B cell (primary cell): ENCODE measurements at regions of chr6 and their contacts with region 1.

Region 1: DNA sequence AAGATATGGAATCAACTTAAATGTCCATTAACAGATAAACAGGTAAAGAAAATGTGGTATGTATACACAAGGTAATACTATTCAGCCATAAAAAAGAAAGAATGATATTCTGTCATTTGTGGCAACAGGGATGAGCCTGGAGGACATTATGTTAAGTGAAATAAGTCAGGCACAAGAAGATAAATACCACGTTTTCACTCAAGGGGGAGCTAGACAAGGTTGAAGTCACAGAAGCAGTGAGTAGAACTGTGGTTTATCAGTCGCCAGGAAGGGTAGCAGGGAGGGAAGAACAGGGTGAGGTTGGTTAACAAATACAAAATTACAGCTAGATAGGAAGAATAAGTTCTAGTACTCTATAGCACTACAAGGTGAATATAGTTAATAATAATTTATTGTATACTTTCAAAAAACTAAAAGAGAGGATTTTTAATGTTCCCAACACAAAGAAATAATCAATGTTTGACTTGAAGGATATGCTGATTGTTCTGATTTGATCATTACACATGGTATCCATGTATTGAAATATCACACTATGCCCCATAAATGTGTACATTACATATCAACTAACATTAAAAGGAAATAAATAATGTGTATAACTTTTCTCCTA is 21.1 kb downstream of the RTN4IP1 start:
- DNase-seq: peak; percentile 85
- ATAC-seq: peak; percentile 89
- H3K4me3 ChIP-seq: no peak overlapping the region
- H3K4me3 Mint-ChIP-seq: no peak overlapping the region
- H3K27ac ChIP-seq: no peak overlapping the region
- H3K27ac Mint-ChIP-seq: no peak overlapping the region
- H3K4me1 ChIP-seq: peaks cover 25 to 39% of the 10 kb centered on the region in 2 donors
- H3K4me1 Mint-ChIP-seq: peaks cover 43% of the 10 kb centered on the region
- H3K27me3 ChIP-seq: no peaks in the 10 kb centered on the region
- H3K27me3 Mint-ChIP-seq: no peaks in the 10 kb centered on the region
- CTCF ChIP-seq: peak; percentile 92

Region 2: DNA sequence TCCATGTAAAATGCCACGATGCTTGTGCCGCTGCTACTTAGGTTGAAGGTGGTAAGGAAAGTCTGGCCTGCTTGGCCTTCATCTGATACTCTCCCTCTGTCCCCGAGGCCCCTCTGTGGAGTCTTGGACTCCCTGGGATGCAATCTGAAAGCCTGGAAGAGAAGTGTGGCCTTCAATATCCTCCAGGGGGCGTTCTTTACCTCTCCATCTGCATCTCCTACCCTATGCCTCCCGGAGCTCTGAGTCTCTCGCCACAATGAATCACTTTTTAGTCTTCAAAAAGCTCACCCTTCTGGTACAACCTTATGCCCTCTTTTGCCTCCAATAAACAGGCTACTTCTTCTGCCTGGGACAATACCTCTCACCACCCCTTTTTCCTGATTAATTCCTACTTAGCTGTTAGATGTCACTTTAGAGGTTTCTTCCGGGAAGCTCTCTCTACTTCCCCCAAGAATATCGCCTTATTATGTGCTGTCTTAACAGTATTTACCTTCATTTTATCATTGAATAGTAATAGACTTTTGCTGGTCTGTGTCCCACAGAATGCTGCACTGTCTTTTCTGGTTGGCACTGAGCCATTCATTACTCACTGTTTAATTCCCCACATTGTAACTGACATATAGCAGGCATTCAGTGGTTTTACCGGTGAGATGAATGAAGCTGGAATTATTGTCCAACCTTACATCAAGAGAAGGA is 268.7 kb before region 1 on chr6:
- CTCF ChIA-PET with region 1: interaction called, 3 read pairs
- POLR2A ChIA-PET with region 1: no interaction called
- intact Hi-C with region 1: loop called (anchors 1 kb)
- DNase-seq: peak; percentile 66
- ATAC-seq: peak; percentile 74
- H3K4me3 ChIP-seq: peak overlapping the region in 2 of 5 experiments; percentile 17 to 24
- H3K4me3 Mint-ChIP-seq: peak overlapping the region; percentile 61
- H3K27ac ChIP-seq: no peak overlapping the region
- H3K27ac Mint-ChIP-seq: no peak overlapping the region
- H3K4me1 ChIP-seq: peaks cover 5% of the 10 kb centered on the region in 2 donors
- H3K4me1 Mint-ChIP-seq: peaks cover 2% of the 10 kb centered on the region
- H3K27me3 ChIP-seq: peaks cover 0 to 2% (median 0%) of the 10 kb centered on the region in 4 experiments
- H3K27me3 Mint-ChIP-seq: peaks cover 31% of the 10 kb centered on the region
- CTCF ChIP-seq: peak; percentile 81

Region 3: GRCh38 chr6:106568530-106568929 is 39.6 kb before region 1 on chr6:
- CTCF ChIA-PET with region 1: interaction called, 17 read pairs
- POLR2A ChIA-PET with region 1: interaction called, 3 read pairs
- intact Hi-C with region 1: loop called (anchors 5 kb)
- DNase-seq: no peak
- ATAC-seq: no peak
- H3K4me3 ChIP-seq: no peak overlapping the region
- H3K4me3 Mint-ChIP-seq: no peak overlapping the region
- H3K27ac ChIP-seq: no peak overlapping the region
- H3K27ac Mint-ChIP-seq: no peak overlapping the region
- H3K4me1 ChIP-seq: no peaks in the 10 kb centered on the region
- H3K4me1 Mint-ChIP-seq: peaks cover 14% of the 10 kb centered on the region
- H3K27me3 ChIP-seq: no peaks in the 10 kb centered on the region
- H3K27me3 Mint-ChIP-seq: no peaks in the 10 kb centered on the region
- CTCF ChIP-seq: no peak

Region 4: GRCh38 chr6:106629103-106629858 is 21.1 kb after region 1 on chr6 and contains the starts of genes QRSL1 and RTN4IP1:
- CTCF ChIA-PET with region 1: interaction called, 75 read pairs
- POLR2A ChIA-PET with region 1: interaction called, 8 read pairs
- intact Hi-C with region 1: loop called (anchors 1 kb)
- DNase-seq: peak; percentile 96
- ATAC-seq: peak; percentile 83
- H3K4me3 ChIP-seq: peak within 1 kb of the TSS; percentile 67 to 98 (median 94)
- H3K4me3 Mint-ChIP-seq: peak within 1 kb of the TSS; percentile 98
- H3K27ac ChIP-seq: peak within 1 kb of the TSS; percentile 87 to 97
- H3K27ac Mint-ChIP-seq: peak within 1 kb of the TSS; percentile 98
- H3K4me1 ChIP-seq: peaks cover 43 to 50% of the 10 kb centered on the region in 2 donors
- H3K4me1 Mint-ChIP-seq: peaks cover 64% of the 10 kb centered on the region
- H3K27me3 ChIP-seq: no peaks in the 10 kb centered on the region
- H3K27me3 Mint-ChIP-seq: no peaks in the 10 kb centered on the region
- CTCF ChIP-seq: no peak
- total RNA-seq, gene QRSL1: 38.5 and 42.1 TPM in 2 replicates
- total RNA-seq, gene RTN4IP1: 12.1 and 13.3 TPM in 2 replicates

Region 5: DNA sequence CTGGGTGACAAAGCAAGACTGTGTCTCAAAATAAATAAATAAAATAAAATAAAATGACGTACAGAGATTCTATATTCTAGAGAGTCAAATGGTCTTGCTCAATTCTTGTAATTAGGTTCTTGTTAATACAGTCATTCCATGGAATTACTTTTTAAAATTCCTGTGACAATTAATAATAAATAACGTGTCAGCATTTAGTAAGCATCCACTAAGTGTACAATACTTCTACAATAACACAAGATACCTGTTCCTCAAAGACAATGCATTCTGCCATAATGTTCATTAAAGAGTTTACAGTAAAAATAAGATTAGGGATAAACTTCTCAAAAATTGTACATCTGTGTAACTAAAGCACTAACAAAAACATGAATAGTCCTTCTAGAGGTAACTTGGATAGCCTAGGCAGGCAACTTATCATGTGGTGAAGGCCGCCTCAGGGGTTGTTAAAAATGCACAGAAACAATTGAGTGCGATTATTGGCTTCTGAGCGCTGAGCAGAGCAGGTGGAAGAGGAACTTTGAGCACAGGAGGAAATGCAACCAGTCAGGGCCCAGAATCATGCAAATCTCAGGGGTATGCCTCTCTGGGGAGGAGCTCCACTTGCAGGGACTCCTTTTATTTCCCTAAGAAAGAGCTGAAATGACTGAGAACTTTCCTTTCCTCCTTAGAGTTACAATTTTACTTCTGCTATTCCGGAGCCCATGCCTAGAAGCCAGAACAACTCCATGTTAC is 58.3 kb after region 1 on chr6:
- CTCF ChIA-PET with region 1: interaction called, 15 read pairs
- POLR2A ChIA-PET with region 1: no interaction called
- intact Hi-C with region 1: loop called (anchors 2 kb)
- DNase-seq: peak; percentile 86
- ATAC-seq: peak; percentile 99
- H3K4me3 ChIP-seq: peak overlapping the region in 2 of 5 experiments; percentile 2 to 29
- H3K4me3 Mint-ChIP-seq: peak overlapping the region; percentile 80
- H3K27ac ChIP-seq: peak overlapping the region; percentile 30 to 81
- H3K27ac Mint-ChIP-seq: peak overlapping the region; percentile 93
- H3K4me1 ChIP-seq: peaks cover 49 to 61% of the 10 kb centered on the region in 2 donors
- H3K4me1 Mint-ChIP-seq: peaks cover 64% of the 10 kb centered on the region
- H3K27me3 ChIP-seq: no peaks in the 10 kb centered on the region
- H3K27me3 Mint-ChIP-seq: no peaks in the 10 kb centered on the region
- CTCF ChIP-seq: no peak

Region 6: DNA sequence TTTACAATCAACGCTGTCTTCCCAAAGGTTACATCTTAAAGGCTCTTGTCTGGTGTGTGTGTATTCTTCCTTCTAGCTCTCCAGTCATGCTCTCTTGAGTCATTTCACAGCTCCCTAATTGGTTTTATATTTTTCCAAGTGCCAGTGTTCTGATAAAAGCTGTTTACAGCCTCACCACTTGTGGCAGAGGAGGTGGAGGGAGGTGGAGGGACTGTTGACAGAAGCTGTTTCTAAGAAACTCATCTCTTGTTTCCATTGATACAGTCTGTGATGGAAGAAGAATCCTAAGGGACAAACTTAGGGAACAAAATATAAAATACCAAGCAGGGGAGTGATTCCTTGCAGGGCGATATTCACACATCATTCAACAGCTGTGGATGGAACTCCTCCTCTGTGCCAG is 85.3 kb after region 1 on chr6:
- CTCF ChIA-PET with region 1: interaction called, 80 read pairs
- POLR2A ChIA-PET with region 1: no interaction called
- intact Hi-C with region 1: loop called (anchors 1 kb)
- DNase-seq: no peak
- ATAC-seq: no peak
- H3K4me3 ChIP-seq: no peak overlapping the region
- H3K4me3 Mint-ChIP-seq: no peak overlapping the region
- H3K27ac ChIP-seq: no peak overlapping the region
- H3K27ac Mint-ChIP-seq: no peak overlapping the region
- H3K4me1 ChIP-seq: peaks cover 36 to 43% of the 10 kb centered on the region in 2 donors
- H3K4me1 Mint-ChIP-seq: peaks cover 55% of the 10 kb centered on the region
- H3K27me3 ChIP-seq: no peaks in the 10 kb centered on the region
- H3K27me3 Mint-ChIP-seq: no peaks in the 10 kb centered on the region
- CTCF ChIP-seq: no peak

Region 7: GRCh38 chr6:106844930-106845329 is 236.8 kb after region 1 on chr6:
- CTCF ChIA-PET with region 1: no interaction called
- POLR2A ChIA-PET with region 1: no interaction called
- intact Hi-C with region 1: loop called (anchors 5 kb)
- DNase-seq: peak; percentile 49
- ATAC-seq: no peak
- H3K4me3 ChIP-seq: no peak overlapping the region
- H3K4me3 Mint-ChIP-seq: peak overlapping the region; percentile 8
- H3K27ac ChIP-seq: peak overlapping the region in 1 of 2 donors; percentile 77
- H3K27ac Mint-ChIP-seq: peak overlapping the region; percentile 23
- H3K4me1 ChIP-seq: peaks cover 40 to 49% of the 10 kb centered on the region in 2 donors
- H3K4me1 Mint-ChIP-seq: peaks cover 47% of the 10 kb centered on the region
- H3K27me3 ChIP-seq: no peaks in the 10 kb centered on the region
- H3K27me3 Mint-ChIP-seq: no peaks in the 10 kb centered on the region
- CTCF ChIP-seq: no peak

Region 8: GRCh38 chr6:107345393-107345792 is 737.2 kb after region 1 on chr6:
- CTCF ChIA-PET with region 1: no interaction called
- POLR2A ChIA-PET with region 1: no interaction called
- intact Hi-C with region 1: no loop called
- DNase-seq: no peak
- ATAC-seq: no peak
- H3K4me3 ChIP-seq: no peak overlapping the region
- H3K4me3 Mint-ChIP-seq: no peak overlapping the region
- H3K27ac ChIP-seq: no peak overlapping the region
- H3K27ac Mint-ChIP-seq: no peak overlapping the region
- H3K4me1 ChIP-seq: no peaks in the 10 kb centered on the region
- H3K4me1 Mint-ChIP-seq: peaks cover 6% of the 10 kb centered on the region
- H3K27me3 ChIP-seq: no peaks in the 10 kb centered on the region
- H3K27me3 Mint-ChIP-seq: no peaks in the 10 kb centered on the region
- CTCF ChIP-seq: no peak